BJ (cell line): ENCODE measurements at regions of chr9 and their contacts with region 1.

Region 1: GRCh38 chr9:124852829-124853531 is at the start of gene WDR38:
- DNase-seq: no peak
- H3K4me3 ChIP-seq: peak within 1 kb of the TSS; percentile 46
- H3K27me3 ChIP-seq: peaks cover 3% of the 10 kb centered on the region; the same call in 1 of the 2 replicates
- CTCF ChIP-seq: peak; percentile 88
- polyA plus RNA-seq, gene WDR38: not detected in 2 replicates

Region 2: GRCh38 chr9:124764774-124765438 is 88.1 kb before region 1 on chr9:
- CTCF ChIA-PET with region 1: interaction called, 1,161 read pairs
- POLR2A ChIA-PET with region 1: no interaction called
- DNase-seq: no peak
- H3K4me3 ChIP-seq: no peak overlapping the region
- H3K27me3 ChIP-seq: peaks cover 23% of the 10 kb centered on the region
- CTCF ChIP-seq: peak; percentile 42

Region 3: DNA sequence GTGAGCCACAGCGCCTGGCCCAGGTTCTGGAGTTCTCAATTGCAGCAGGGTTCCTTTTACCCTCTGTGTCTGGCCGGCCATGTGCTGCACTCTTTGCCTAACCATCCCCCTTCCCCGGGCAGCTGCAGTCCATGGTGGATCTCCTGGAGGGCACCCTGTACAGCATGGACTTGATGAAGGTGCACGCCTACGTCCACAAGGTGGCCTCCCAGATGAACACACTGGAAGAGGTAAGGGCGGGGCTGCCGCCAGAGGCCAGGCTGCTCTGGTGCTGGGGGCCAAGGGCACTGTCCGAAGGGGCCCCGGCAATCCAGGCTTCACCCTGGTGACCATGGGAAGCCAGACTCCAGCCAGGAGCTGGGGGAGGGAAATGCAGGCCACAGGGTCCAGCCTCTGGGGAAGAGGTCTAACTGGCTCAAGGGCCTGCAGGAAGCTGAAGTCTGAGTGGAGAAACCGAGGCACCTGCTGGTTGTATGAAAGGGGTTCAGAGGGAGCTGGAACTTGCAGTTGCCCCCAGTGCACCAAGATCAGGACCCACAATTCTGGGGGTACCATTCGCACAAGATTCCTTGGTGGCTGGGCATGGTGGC is 58.0 kb before region 1 on chr9:
- CTCF ChIA-PET with region 1: interaction called, 38 read pairs
- POLR2A ChIA-PET with region 1: no interaction called
- DNase-seq: no peak
- H3K4me3 ChIP-seq: no peak overlapping the region
- H3K27me3 ChIP-seq: no peaks in the 10 kb centered on the region
- CTCF ChIP-seq: no peak

Region 4: GRCh38 chr9:124818431-124819281 is 34.3 kb before region 1 on chr9:
- CTCF ChIA-PET with region 1: interaction called, 46 read pairs
- POLR2A ChIA-PET with region 1: interaction called, 14 read pairs
- DNase-seq: no peak
- H3K4me3 ChIP-seq: no peak overlapping the region
- H3K27me3 ChIP-seq: no peaks in the 10 kb centered on the region
- CTCF ChIP-seq: no peak

Region 5: DNA sequence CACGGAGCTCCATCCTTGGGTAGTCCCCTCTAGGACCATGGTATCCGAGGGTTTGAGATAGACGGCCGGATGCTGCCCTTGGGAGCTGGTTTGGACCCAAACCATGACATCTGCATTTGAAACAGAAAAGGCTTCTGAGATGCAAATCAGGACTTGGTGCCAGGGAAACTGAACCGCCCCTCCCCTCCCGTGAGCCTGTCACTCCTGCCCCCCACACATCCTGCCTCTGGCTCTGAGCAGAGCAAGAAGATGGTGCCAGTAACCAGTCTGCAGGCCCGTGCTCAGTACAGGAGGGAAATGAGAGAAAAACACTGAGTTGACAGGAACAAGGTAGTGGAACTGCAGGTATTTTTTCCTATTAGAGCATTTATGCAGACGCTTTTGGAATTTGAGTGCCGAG is 27.5 kb after region 1 on chr9:
- CTCF ChIA-PET with region 1: interaction called, 14 read pairs
- POLR2A ChIA-PET with region 1: no interaction called
- DNase-seq: no peak
- H3K4me3 ChIP-seq: no peak overlapping the region
- H3K27me3 ChIP-seq: no peaks in the 10 kb centered on the region
- CTCF ChIP-seq: no peak

Region 6: GRCh38 chr9:125143375-125144090 is 290.6 kb after region 1 on chr9 and contains the start of gene SCAI:
- CTCF ChIA-PET with region 1: interaction called, 11 read pairs
- POLR2A ChIA-PET with region 1: no interaction called
- DNase-seq: peak; percentile 89
- H3K4me3 ChIP-seq: peak within 1 kb of the TSS; percentile 78
- H3K27me3 ChIP-seq: no peaks in the 10 kb centered on the region
- CTCF ChIP-seq: peak; percentile 99
- polyA plus RNA-seq, gene SCAI: 2.0 and 4.4 TPM in 2 replicates

Region 7: GRCh38 chr9:125472926-125473701 is 620.1 kb after region 1 on chr9:
- CTCF ChIA-PET with region 1: no interaction called
- POLR2A ChIA-PET with region 1: no interaction called
- DNase-seq: no peak
- H3K4me3 ChIP-seq: no peak overlapping the region
- H3K27me3 ChIP-seq: no peaks in the 10 kb centered on the region
- CTCF ChIP-seq: peak; percentile 27; the same call in 1 of the 2 replicates